GM12878 (cell line): ENCODE measurements at regions of chr15 and their contacts with region 1.

Region 1: DNA sequence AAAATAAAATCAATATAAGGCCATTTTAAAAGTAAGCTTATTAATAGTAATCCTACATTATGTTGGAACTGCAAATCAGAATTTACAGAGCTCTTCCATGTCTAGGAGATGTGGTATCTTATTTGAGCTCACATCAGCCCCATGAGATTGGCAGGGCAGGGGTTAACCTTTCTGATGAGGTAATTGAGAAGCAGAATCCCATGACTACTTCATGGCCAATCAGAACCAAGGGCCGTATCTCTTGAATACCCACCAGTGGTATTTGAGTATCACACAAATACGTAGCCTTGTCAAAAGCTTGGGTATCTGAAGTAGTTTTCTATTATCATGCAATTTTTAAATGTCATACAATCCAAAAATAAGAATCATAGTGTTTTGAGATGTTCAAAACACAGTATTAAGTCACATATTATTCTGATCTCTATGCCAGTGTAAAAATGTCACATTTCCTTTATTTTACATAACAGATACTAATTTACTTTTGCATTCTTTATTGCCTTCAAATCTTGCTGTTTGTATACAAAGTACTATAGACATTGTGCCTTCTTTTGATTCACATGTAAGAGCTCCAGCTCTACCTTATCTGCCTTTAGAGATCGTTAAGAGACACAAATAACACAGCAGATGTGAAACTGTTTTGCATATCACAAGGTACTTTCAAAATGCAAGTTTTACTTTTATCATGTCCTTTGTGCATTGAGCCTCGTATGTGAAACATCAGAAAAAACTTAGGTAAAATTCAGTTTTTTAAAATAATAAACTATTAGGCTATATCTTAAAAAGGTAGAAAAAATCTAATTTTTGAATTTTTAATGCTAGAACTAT is 251.7 kb upstream of the GOLGA6L4 start:
- DNase-seq: no peak
- ATAC-seq: peak; percentile 91
- H3K4me3 ChIP-seq: peak overlapping the region; percentile 32
- H3K27ac ChIP-seq: peak overlapping the region; percentile 86
- H3K4me1 ChIP-seq: peaks cover 32% of the 10 kb centered on the region
- H3K27me3 ChIP-seq: no peaks in the 10 kb centered on the region
- CTCF ChIP-seq: no peak
- EP300 ChIP-seq: no peak
- POLR2A ChIP-seq: no peak
- RAD21 ChIP-seq: no peak

Region 2: DNA sequence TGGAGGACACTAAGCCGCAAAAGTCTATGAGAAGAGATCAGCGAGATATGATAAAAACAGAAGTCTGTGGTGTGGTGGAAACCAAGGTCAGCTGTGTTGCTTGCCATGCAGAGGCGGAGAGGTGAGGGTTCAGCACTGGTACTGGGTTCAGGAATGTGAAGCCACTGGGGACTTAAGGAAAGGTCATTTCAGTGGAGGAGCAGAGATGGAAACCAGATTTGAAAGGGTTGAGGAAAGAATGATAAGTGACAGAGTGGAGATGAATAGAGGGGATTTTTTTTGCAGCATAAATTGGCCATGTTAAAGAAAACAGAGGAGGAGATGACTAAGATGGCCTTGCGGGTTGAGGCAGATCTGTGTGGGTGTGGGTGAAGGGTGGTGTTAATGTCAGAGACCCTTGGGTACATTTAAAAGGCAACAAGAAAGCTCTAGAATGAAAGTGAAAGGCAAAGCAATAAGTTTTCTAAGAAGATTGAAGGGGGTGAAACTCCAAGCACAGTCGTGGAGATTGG is 64.5 kb before region 1 on chr15:
- CTCF ChIA-PET with region 1: interaction called, 3 read pairs
- POLR2A ChIA-PET with region 1: no interaction called
- RAD21 ChIA-PET with region 1: interaction called, 11 read pairs
- SMC1A ChIA-PET with region 1: interaction called, 5 read pairs
- in situ Hi-C with region 1: no loop called
- intact Hi-C with region 1: no loop called
- DNase-seq: peak; percentile 71
- ATAC-seq: peak; percentile 96
- H3K4me3 ChIP-seq: peak overlapping the region; percentile 3; the same call in 1 of the 2 replicates
- H3K27ac ChIP-seq: peak overlapping the region; percentile 68
- H3K4me1 ChIP-seq: peaks cover 20% of the 10 kb centered on the region
- H3K27me3 ChIP-seq: no peaks in the 10 kb centered on the region
- CTCF ChIP-seq: no peak
- EP300 ChIP-seq: no peak
- POLR2A ChIP-seq: no peak
- RAD21 ChIP-seq: no peak

Region 3: GRCh38 chr15:83928392-83928734 is 55.5 kb before region 1 on chr15:
- CTCF ChIA-PET with region 1: interaction called, 4 read pairs
- POLR2A ChIA-PET with region 1: interaction called, 3 read pairs
- RAD21 ChIA-PET with region 1: interaction called, 7 read pairs
- SMC1A ChIA-PET with region 1: interaction called, 17 read pairs
- in situ Hi-C with region 1: no loop called
- intact Hi-C with region 1: no loop called
- DNase-seq: peak; percentile 84
- ATAC-seq: peak; percentile 90
- H3K4me3 ChIP-seq: peak overlapping the region; percentile 31; the same call in 1 of the 2 replicates
- H3K27ac ChIP-seq: peak overlapping the region; percentile 99
- H3K4me1 ChIP-seq: peaks cover 36% of the 10 kb centered on the region
- H3K27me3 ChIP-seq: no peaks in the 10 kb centered on the region
- CTCF ChIP-seq: no peak
- EP300 ChIP-seq: peak; percentile 14 to 63; a peak in 2 of 4 replicates
- POLR2A ChIP-seq: no peak
- RAD21 ChIP-seq: no peak

Region 4: DNA sequence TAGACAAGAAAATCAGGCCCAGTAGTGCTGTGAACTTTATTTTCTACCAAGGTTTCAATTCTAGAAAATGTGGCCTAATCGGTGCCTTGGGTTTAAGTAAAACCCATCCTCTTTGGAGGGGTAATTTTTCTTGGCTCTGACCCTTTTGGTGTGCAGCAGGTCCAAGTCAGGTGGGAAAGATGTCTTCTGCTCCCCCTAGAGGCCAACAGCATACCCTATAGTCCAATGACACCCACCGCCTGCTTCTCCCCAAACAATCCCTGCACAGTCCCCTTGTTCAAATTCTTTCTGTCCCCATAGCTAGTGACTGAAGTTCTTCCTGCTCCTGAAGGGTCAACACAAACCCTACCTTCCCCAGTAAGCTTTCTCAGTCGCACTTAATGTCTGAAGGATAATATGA is 10.0 kb before region 1 on chr15:
- CTCF ChIA-PET with region 1: interaction called, 34 read pairs
- POLR2A ChIA-PET with region 1: interaction called, 5 read pairs
- RAD21 ChIA-PET with region 1: interaction called, 12 read pairs
- SMC1A ChIA-PET with region 1: interaction called, 14 read pairs
- in situ Hi-C with region 1: no loop called
- intact Hi-C with region 1: no loop called
- DNase-seq: no peak
- ATAC-seq: peak; percentile 93
- H3K4me3 ChIP-seq: no peak overlapping the region
- H3K27ac ChIP-seq: no peak overlapping the region
- H3K4me1 ChIP-seq: no peaks in the 10 kb centered on the region
- H3K27me3 ChIP-seq: no peaks in the 10 kb centered on the region
- CTCF ChIP-seq: peak; percentile 58 to 64 (median 61)
- EP300 ChIP-seq: no peak
- POLR2A ChIP-seq: no peak
- RAD21 ChIP-seq: peak; percentile 60

Region 5: DNA sequence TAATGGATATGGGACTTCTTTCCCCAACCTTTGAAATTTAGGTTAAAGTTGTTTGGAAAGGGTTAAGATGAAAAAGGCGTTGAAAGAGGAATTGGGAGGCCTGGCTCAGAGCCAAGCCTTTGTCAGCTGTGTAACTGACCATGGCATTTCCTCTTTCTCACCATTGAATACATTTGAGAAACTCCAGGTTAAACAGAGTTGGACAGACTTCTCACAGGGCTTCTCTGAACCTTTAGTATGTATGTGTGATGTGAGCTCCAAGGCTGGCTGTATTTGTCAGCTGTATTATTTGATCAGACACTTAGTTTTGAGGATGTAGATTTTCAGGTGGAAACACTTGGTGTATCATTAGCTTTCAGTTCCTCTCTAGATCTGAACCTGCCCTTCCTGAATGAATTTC is 115.3 kb after region 1 on chr15:
- CTCF ChIA-PET with region 1: no interaction called
- POLR2A ChIA-PET with region 1: no interaction called
- RAD21 ChIA-PET with region 1: no interaction called
- SMC1A ChIA-PET with region 1: no interaction called
- in situ Hi-C with region 1: no loop called
- intact Hi-C with region 1: no loop called
- DNase-seq: peak; percentile 55
- ATAC-seq: peak; percentile 82
- H3K4me3 ChIP-seq: no peak overlapping the region
- H3K27ac ChIP-seq: peak overlapping the region; percentile 24; the same call in 1 of the 2 replicates
- H3K4me1 ChIP-seq: peaks cover 8% of the 10 kb centered on the region
- H3K27me3 ChIP-seq: no peaks in the 10 kb centered on the region
- CTCF ChIP-seq: no peak
- EP300 ChIP-seq: no peak
- POLR2A ChIP-seq: no peak
- RAD21 ChIP-seq: no peak